Transverse colon (tissue), 4 donors: ENCODE measurements at regions of chr3 and their contacts with region 1.

Region 1: DNA sequence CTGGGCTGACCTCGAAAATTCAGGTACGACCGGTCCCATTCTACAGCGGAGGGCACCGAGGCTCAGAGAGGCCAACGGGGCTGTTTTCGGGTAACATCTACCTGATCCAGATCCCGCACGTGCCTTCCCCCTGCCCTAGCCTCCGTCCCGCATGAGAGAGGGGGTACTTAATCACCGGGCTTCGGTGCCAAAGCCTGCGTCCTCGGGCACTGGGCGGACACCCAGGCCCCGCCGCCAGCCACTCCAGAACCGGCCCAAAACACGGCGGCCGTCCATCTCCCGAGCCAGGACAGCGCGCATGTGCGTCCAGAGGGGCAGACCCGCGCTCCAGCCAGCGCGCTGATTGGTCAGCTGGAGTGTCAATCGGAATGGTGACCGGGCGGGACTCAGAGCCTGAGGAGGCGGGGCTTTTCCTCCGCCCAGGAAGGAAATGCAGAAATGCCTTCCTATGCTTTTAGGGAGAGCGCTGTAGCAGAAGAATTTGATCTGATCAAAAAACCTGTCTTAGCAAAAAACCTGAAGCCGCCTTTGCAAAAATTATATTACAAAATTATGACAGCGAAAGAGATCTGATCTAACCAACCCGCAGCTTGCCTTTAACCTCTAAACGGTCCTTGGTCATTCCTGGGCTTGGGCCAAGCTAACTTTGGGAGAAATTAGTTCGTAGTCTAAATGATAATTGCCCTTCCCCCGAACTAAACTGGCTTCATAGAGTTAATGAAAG is at the start of gene RPUSD3:
- DNase-seq: peak; percentile 99
- H3K4me3 ChIP-seq: peak within 1 kb of the TSS; percentile 43 to 72 (median 58)
- H3K27ac ChIP-seq: peak within 1 kb of the TSS; percentile 81 to 87 (median 84)
- H3K4me1 ChIP-seq: peaks cover 0 to 15% (median 11%) of the 10 kb centered on the region in 4 donors
- H3K27me3 ChIP-seq: no peaks in the 10 kb centered on the region
- CTCF ChIP-seq: no peak
- EP300 ChIP-seq: no peak
- POLR2A ChIP-seq: no peak
- total RNA-seq, gene RPUSD3: 34.1 to 78.0 (median 43.9) TPM

Region 2: DNA sequence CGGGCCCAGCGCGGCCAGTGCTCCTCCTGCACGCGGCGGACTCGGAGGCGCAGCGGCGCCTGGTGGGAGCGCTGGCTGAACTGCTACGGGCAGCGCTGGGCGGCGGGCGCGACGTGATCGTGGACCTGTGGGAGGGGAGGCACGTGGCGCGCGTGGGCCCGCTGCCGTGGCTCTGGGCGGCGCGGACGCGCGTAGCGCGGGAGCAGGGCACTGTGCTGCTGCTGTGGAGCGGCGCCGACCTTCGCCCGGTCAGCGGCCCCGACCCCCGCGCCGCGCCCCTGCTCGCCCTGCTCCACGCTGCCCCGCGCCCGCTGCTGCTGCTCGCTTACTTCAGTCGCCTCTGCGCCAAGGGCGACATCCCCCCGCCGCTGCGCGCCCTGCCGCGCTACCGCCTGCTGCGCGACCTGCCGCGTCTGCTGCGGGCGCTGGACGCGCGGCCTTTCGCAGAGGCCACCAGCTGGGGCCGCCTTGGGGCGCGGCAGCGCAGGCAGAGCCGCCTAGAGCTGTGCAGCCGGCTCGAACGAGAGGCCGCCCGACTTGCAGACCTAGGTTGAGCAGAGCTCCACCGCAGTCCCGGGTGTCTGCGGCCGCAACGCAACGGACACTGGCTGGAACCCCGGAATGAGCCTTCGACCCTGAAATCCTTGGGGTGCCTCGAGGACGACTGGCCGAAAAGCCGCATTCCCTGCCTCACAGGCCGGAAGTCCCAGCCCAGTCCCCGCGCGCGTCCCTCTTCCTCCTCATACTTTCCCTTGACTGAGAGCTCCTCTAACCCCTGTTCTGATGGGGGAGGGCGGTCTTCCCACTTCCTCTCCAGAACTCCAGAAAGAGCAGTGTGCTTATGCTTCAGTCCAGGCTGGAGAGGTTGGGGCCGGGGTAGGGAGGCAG is 71.6 kb after region 1 on chr3:
- in situ Hi-C with region 1: no loop called
- intact Hi-C with region 1: loop called (anchors 10 kb)
- DNase-seq: peak; percentile 77
- H3K4me3 ChIP-seq: peak overlapping the region; percentile 53 to 72 (median 53)
- H3K27ac ChIP-seq: peak overlapping the region; percentile 90 to 95 (median 92)
- H3K4me1 ChIP-seq: peaks cover 28 to 44% (median 40%) of the 10 kb centered on the region in 4 donors
- H3K27me3 ChIP-seq: no peaks in the 10 kb centered on the region
- CTCF ChIP-seq: peak in 3 of 5 experiments; percentile 49 to 54 (median 50)
- EP300 ChIP-seq: no peak
- POLR2A ChIP-seq: peak; percentile 48